Naive thymus-derived CD8-positive, alpha-beta T cell (primary cell): ENCODE measurements at regions of chr3 and their contacts with region 1.

Region 1: DNA sequence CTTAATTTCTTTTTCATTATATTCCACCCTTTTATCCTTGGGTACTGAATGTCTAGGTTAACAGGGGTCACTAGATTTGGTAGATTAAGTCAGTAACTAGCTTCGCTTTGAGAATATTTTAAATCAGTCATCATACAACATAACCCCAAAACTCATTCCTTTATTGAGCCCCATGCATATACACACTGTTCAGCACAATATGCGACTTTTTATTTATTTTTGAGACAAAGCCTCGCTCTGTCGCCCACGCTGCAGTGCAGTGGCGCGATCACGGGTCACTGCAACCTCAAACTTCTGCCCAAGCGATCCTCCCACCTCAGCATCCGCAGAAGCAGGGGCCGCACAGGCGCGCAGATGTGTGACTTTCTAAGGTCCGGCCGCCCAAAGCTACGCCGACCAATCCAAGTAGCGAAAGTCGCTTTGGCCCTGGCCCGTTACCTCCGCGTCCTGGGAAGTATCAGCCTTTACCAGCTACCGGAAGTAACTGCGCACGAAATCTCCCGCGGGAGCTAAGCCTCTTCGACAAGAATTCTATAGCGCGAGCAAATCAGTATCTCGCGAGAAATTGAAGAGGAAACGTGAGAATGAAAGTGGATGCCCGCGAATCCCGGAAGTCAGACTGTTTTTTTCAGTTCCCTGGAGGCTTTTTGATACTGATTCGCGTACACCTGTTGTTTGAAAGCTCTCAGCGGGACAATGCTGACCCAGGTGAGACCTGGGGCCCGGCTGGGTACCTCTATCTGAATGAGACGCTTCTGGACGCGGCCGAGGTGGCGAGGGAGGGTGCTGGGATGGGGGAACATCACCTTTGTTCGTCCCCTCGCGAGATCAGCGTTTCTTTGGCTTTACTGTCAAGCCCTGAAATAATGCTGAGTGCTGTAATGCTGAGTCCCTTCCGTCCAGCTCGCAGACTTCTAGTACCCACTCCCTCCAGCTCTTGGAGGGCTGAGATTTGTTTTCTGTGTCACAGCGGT is at the starts of genes DHFR2 and NSUN3:
- DNase-seq: peak; percentile 61 to 97 (median 84)
- ATAC-seq: peak; percentile 88 to 89
- H3K4me3 Mint-ChIP-seq: peak within 1 kb of the TSS; percentile 97 to 99 (median 98)
- H3K27ac Mint-ChIP-seq: peak within 1 kb of the TSS; percentile 99 to 100 (median 100)
- H3K4me1 Mint-ChIP-seq: peaks cover 20 to 57% (median 47%) of the 10 kb centered on the region in 4 donors
- H3K27me3 Mint-ChIP-seq: no peaks in the 10 kb centered on the region
- polyA plus RNA-seq, gene DHFR2: 2.5 to 5.7 (median 2.7) TPM
- polyA plus RNA-seq, gene NSUN3: 7.8 to 10.9 (median 8.2) TPM

Region 2: GRCh38 chr3:93979833-93980676 is 82.7 kb before region 1 on chr3 and contains the start of gene ARL13B:
- POLR2A ChIA-PET with region 1: interaction called, 16 read pairs
- DNase-seq: peak; percentile 83 to 98 (median 94)
- ATAC-seq: peak; percentile 99 to 100
- H3K4me3 Mint-ChIP-seq: peak within 1 kb of the TSS; percentile 80 to 94 (median 89)
- H3K27ac Mint-ChIP-seq: peak within 1 kb of the TSS; percentile 81 to 98 (median 92)
- H3K4me1 Mint-ChIP-seq: peaks cover 9 to 24% (median 14%) of the 10 kb centered on the region in 4 donors
- H3K27me3 Mint-ChIP-seq: peaks cover 0 to 2% (median 0%) of the 10 kb centered on the region in 5 donors
- polyA plus RNA-seq, gene ARL13B: 3.4 to 7.4 (median 4.4) TPM

Region 3: GRCh38 chr3:94012185-94012584 is 50.5 kb before region 1 on chr3:
- POLR2A ChIA-PET with region 1: no interaction called
- DNase-seq: no peak
- ATAC-seq: no peak
- H3K4me3 Mint-ChIP-seq: no peak overlapping the region
- H3K27ac Mint-ChIP-seq: peak overlapping the region in 1 of 10 donors; percentile 22
- H3K4me1 Mint-ChIP-seq: peaks cover 8 to 10% (median 9%) of the 10 kb centered on the region in 4 donors
- H3K27me3 Mint-ChIP-seq: no peaks in the 10 kb centered on the region

Region 4: DNA sequence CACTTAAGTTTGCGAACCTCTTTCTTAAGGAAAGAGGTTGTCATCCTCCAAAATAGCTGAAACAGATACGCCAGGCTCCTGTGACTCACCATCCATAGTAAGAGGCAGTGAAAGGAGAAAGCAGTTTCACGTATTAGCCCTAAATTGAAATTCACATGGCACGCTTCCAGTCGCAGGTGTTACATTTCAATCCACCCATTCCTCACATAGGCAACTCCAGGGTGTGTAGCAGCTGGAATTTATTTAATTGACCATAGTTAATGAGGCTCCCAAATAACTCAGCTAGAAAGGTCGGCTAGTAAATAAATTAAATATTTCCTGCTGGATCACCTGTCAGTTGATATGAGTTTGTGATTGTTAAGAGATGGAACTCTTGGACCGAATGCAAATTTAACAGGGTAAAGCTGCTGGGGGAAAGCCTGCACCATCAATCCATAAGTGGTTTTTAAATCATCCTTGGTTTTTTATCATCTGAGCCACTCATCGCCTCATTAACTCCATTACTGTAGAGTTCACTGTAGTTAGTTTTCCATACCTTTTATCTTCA is 19.7 kb after region 1 on chr3:
- POLR2A ChIA-PET with region 1: interaction called, 12 read pairs
- DNase-seq: no peak
- ATAC-seq: no peak
- H3K4me3 Mint-ChIP-seq: no peak overlapping the region
- H3K27ac Mint-ChIP-seq: peak overlapping the region in 3 of 10 donors; percentile 19 to 44 (median 24)
- H3K4me1 Mint-ChIP-seq: peaks cover 26 to 56% (median 52%) of the 10 kb centered on the region in 4 donors
- H3K27me3 Mint-ChIP-seq: no peaks in the 10 kb centered on the region

Region 5: DNA sequence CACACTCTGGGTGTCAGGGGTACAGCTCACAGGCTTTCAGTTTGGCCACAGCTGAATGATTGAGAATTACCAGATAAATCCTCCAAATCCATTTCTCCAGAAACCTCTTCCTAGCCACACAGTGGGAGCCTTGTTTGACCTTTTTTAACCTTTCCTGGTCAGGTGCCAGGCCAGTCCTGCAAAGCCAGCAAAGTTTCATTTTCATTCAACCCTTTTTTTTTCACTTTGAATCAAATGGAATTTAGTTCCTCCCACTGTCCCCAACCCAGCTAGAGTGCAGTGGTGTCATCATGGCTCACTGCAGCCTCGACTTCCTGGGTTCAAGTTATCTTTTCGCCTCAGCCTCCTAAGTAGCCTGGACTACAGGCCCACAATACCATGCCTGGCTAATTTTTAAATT is 68.0 kb after region 1 on chr3:
- POLR2A ChIA-PET with region 1: no interaction called
- DNase-seq: no peak
- ATAC-seq: no peak
- H3K4me3 Mint-ChIP-seq: no peak overlapping the region
- H3K27ac Mint-ChIP-seq: peak overlapping the region in 1 of 10 donors; percentile 28
- H3K4me1 Mint-ChIP-seq: peaks cover 0 to 1% (median 0%) of the 10 kb centered on the region in 4 donors
- H3K27me3 Mint-ChIP-seq: no peaks in the 10 kb centered on the region